ENCODE measurements at regions of chr13 and their contacts with region 1.

Region 1: GRCh38 chr13:48370815-48371214 is 42.1 kb downstream of the LPAR6 start:
- DNase-seq: no peak
- H3K4me3 ChIP-seq: no peak overlapping the region
- H3K27ac ChIP-seq: no peak overlapping the region
- H3K27me3 ChIP-seq: no peaks in the 10 kb centered on the region
- CTCF ChIP-seq: no peak

Region 2: GRCh38 chr13:48562296-48563066 is 191.7 kb after region 1 on chr13:
- in situ Hi-C with region 1: loop called (anchors 25 kb)
- DNase-seq: no peak
- H3K4me3 ChIP-seq: no peak overlapping the region
- H3K27ac ChIP-seq: no peak overlapping the region
- H3K27me3 ChIP-seq: no peaks in the 10 kb centered on the region
- CTCF ChIP-seq: no peak

Measured in brain microvascular endothelial cell (primary cell).